GM12878 (cell line): ENCODE measurements at regions of chr6 and their contacts with region 1.

Region 1: DNA sequence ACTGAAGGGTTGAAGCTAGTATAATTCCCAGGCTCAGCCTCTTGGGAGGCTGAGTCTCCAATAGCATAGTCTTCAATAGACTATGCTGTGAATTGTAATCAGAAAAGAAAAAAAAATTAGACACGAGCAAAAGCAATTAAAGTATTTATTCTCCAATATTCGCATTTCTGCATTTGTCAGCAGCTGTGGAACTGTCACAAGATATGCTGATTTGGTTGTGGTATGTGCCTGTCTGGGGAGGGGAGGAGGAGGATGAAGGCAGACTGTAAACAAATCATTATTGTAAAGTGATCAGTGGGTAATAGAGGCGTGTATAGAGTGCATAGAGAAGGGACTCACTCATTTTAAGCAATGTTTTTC is 10.1 kb upstream of the BICRAL start:
- DNase-seq: no peak
- ATAC-seq: peak; percentile 14; the same call in 1 of the 3 replicates
- H3K4me3 ChIP-seq: peak overlapping the region; percentile 51
- H3K27ac ChIP-seq: peak overlapping the region; percentile 54
- H3K4me1 ChIP-seq: peaks cover 49% of the 10 kb centered on the region
- H3K27me3 ChIP-seq: no peaks in the 10 kb centered on the region
- CTCF ChIP-seq: no peak
- EP300 ChIP-seq: no peak
- POLR2A ChIP-seq: no peak
- RAD21 ChIP-seq: no peak

Region 2: DNA sequence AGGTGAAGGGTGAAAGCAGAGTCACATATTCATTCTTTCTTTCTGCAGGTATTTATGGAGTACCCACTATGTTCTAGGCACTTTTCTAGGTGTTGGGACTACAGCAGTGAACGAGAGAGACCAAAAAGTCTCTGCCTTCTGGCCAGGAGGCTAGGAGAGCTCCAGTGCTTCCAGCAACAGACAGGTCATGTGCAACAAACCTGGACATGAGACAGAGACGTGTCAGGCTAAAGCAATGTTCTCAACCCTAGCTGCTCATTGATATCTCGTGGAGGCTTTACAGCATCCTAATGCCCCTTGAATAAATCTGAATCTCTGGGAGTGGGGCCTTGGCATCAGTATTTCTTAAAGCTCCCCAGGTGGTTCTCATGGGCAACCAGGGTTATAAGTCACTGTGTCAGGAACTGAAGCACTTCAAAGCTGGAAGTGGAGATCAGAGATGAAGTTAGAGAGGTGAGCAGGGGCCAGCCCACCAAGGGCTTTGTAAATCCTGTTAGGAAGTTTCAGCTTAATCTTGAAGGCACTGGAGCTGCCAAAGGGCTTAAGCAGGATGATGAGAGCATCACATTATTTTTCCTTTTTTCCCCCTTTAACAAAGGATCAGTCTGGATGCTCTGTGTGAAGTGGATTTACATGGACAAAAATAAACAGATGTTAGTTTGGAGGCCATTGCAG is 12.8 kb before region 1 on chr6:
- CTCF ChIA-PET with region 1: interaction called, 3 read pairs
- POLR2A ChIA-PET with region 1: interaction called, 10 read pairs
- RAD21 ChIA-PET with region 1: no interaction called
- SMC1A ChIA-PET with region 1: interaction called, 6 read pairs
- in situ Hi-C with region 1: no loop called
- intact Hi-C with region 1: no loop called
- DNase-seq: no peak
- ATAC-seq: no peak
- H3K4me3 ChIP-seq: no peak overlapping the region
- H3K27ac ChIP-seq: no peak overlapping the region
- H3K4me1 ChIP-seq: no peaks in the 10 kb centered on the region
- H3K27me3 ChIP-seq: no peaks in the 10 kb centered on the region
- CTCF ChIP-seq: no peak
- EP300 ChIP-seq: no peak
- POLR2A ChIP-seq: no peak
- RAD21 ChIP-seq: no peak